ENCODE measurements at regions of chr18 and their contacts with region 1.

Region 1: DNA sequence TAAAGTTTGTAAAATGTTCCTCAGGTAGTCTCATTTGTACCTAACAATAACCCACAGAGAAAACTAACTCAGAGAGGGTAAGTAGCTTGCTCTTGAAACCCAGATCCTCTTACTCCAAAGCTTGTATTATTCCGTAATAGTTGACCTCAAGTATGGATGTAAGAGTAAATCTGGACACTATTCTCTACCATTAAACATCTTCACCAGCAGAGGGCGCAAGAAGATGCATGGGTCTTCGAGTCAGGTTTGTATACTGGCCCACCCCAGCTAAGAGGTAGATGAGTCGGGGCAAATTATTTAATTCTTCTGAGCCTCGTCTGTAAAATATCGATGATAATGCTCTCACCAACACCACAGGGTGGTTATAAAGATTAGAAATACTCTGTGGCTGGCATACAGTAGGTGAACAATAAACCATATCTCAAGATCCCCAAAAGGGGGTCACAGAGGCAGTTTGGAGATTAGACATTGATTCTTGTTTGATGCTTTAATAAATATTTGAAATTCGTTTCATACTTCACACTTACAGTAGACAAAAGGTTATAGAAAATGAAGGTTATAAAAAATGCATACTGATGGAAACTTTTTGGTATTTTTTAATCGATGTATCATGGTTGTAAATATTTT is 3.5 kb upstream of the CABLES1 start:
- DNase-seq: peak; percentile 55 to 91
- H3K4me3 ChIP-seq: no peak overlapping the region
- H3K27ac ChIP-seq: no peak overlapping the region
- H3K4me1 ChIP-seq: peaks cover 3 to 45% (median 38%) of the 10 kb centered on the region in 4 donors
- H3K27me3 ChIP-seq: peaks cover 0 to 15% (median 4%) of the 10 kb centered on the region in 3 donors
- CTCF ChIP-seq: peak in 5 of 7 experiments; percentile 43 to 81 (median 77)
- EP300 ChIP-seq: no peak
- POLR2A ChIP-seq: no peak

Region 2: DNA sequence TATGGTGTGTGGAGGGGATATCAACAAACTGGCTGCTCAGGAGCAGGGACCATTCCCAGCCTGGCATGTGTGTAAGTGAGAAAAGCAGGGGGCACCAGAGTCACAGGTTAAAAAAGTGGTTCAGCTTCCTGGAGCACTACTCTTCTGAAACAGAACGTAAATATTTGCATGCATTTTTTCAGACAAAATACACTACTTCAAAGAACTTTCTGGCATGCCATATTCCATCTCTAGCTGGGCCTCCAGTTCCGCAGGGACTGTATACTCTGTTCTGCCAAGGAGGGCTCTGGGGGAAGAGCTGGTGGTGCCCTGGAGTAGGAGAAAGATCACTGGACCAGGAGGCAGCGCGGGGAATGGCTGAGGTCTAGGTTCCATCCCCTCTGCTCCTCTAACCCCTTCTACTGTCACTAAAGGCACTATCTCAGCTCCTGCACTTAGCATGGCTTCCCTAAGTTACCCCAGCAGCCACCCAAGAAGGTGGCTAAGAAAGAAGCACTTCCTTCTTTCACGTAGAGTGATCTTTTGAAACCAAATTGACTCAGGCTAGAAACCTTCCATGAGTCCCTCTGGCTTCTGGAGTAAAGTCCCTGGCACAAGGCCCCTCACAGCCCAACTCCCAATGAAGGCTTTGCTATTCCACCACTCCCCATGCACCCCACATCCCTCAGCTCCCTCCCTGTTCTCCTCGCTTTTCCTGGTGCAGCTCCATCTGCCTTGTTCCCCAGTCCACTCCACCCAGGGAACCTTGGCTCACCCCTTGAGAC is 54.1 kb before region 1 on chr18:
- intact Hi-C with region 1: no loop called
- DNase-seq: peak; percentile 50 to 76
- H3K4me3 ChIP-seq: no peak overlapping the region
- H3K27ac ChIP-seq: peak overlapping the region in 1 of 5 donors; percentile 28
- H3K4me1 ChIP-seq: peaks cover 0 to 28% (median 7%) of the 10 kb centered on the region in 4 donors
- H3K27me3 ChIP-seq: peaks cover 0 to 11% (median 0%) of the 10 kb centered on the region in 3 donors
- CTCF ChIP-seq: peak in 4 of 7 experiments; percentile 22 to 54 (median 32)
- EP300 ChIP-seq: no peak
- POLR2A ChIP-seq: no peak

Region 3: DNA sequence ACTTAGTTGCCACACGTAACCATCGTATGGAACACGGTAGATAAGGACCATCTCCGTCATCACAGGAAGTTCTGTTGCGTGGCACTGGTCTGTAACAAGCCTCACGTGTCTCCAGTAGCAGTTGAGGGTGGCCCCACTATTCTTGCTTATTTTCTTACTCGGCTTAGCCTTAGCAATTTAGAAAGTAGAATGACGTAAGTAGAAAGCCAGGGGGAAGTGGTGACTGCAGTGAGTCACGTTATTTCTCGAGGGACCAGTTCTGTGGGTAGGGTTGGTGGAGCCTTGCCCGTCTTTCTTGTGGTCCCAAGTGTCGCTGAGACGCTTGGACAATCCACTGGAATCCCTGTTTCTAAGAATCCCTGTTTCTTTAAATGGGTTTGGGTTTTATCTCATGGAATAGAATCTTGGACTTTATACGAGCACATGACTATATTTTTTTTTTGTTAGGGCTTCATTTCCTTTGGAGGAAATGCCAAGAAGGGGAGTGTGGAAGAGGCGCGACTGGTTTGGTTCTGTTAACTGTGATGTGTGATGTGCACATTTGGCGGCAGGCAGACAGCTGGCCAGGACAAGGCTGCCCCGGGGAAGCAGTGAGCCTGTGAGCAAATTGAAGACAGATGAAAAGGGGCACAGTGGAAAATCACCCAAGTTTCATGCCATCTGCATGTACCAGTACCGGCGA is 99.7 kb after region 1 on chr18:
- intact Hi-C with region 1: loop called (anchors 10 kb)
- DNase-seq: peak; percentile 43 to 72
- H3K4me3 ChIP-seq: no peak overlapping the region
- H3K27ac ChIP-seq: peak overlapping the region; percentile 2 to 59 (median 38)
- H3K4me1 ChIP-seq: peaks cover 17 to 40% (median 24%) of the 10 kb centered on the region in 4 donors
- H3K27me3 ChIP-seq: no peaks in the 10 kb centered on the region
- CTCF ChIP-seq: no peak
- EP300 ChIP-seq: no peak
- POLR2A ChIP-seq: no peak